ENCODE measurements at regions of chr6 and their contacts with region 1.

Region 1: DNA sequence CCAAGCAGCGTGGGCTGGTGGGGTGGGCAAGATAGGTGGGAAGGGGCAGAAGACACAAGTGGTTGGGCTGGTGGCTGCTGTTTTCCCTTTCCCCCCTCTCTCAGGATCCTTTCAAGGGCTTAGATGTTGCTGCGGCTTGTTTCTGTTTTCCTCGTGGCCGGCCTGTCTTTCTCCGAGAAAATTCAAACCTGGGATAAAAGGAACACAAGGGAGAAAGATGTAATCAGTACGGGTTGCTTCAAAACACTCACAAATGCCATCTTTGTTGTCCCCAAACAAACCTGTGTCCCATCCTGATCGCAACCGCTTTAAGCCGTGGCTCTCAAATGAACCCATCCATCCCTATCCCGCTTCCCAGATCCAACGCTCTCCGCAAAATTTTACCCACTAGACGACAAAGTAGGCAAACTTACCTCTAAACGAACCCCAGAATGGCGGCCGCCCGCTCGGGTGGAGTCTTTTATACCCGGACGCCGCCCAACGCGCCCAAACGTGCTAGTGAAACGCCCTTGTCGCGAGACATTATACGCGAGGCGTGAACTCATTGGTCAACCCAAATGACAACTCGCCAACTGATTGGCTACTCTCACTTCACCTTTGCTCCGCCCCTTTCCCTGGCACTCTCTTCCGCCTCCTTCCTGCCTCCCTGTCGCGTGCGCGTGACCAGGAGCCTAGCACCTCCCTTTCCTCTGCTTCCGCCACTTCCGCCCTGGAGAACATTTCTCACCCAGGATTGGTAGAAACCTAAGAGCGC is at the start of gene PPP1R10:
- DNase-seq: peak; percentile 100
- ATAC-seq: peak; percentile 83
- H3K4me3 ChIP-seq: peak within 1 kb of the TSS; percentile 87 to 97 (median 89)
- H3K27ac ChIP-seq: peak within 1 kb of the TSS; percentile 98
- H3K4me1 ChIP-seq: peaks cover 35% of the 10 kb centered on the region
- H3K27me3 ChIP-seq: no peaks in the 10 kb centered on the region; a peak in 1 of 5 replicates
- CTCF ChIP-seq: no peak
- EP300 ChIP-seq: no peak; a peak in 1 of 4 replicates
- POLR2A ChIP-seq: peak; percentile 98 to 100
- RAD21 ChIP-seq: no peak; the same call in 1 of the 2 replicates
- total RNA-seq, gene PPP1R10: 19.5 and 38.4 TPM in 2 replicates

Region 2: GRCh38 chr6:30219244-30219643 is 397.7 kb before region 1 on chr6:
- CTCF ChIA-PET with region 1: no interaction called
- POLR2A ChIA-PET with region 1: no interaction called
- in situ Hi-C with region 1: no loop called
- intact Hi-C with region 1: no loop called
- DNase-seq: peak; percentile 77
- ATAC-seq: peak; percentile 77
- H3K4me3 ChIP-seq: peak overlapping the region in 1 of 3 experiments; percentile 41; a peak in 1 of 6 replicates
- H3K27ac ChIP-seq: no peak overlapping the region
- H3K4me1 ChIP-seq: peaks cover 23% of the 10 kb centered on the region
- H3K27me3 ChIP-seq: no peaks in the 10 kb centered on the region
- CTCF ChIP-seq: peak; percentile 91
- EP300 ChIP-seq: no peak
- POLR2A ChIP-seq: no peak
- RAD21 ChIP-seq: peak; percentile 77

Region 3: GRCh38 chr6:30396833-30397479 is 220.0 kb before region 1 on chr6:
- CTCF ChIA-PET with region 1: no interaction called
- POLR2A ChIA-PET with region 1: no interaction called
- in situ Hi-C with region 1: no loop called
- intact Hi-C with region 1: no loop called
- DNase-seq: peak; percentile 58
- ATAC-seq: peak; percentile 99
- H3K4me3 ChIP-seq: no peak overlapping the region
- H3K27ac ChIP-seq: no peak overlapping the region
- H3K4me1 ChIP-seq: no peaks in the 10 kb centered on the region
- H3K27me3 ChIP-seq: peaks cover 5 to 44% of the 10 kb centered on the region in 2 experiments
- CTCF ChIP-seq: peak; percentile 99
- EP300 ChIP-seq: no peak
- POLR2A ChIP-seq: no peak
- RAD21 ChIP-seq: peak; percentile 95

Region 4: DNA sequence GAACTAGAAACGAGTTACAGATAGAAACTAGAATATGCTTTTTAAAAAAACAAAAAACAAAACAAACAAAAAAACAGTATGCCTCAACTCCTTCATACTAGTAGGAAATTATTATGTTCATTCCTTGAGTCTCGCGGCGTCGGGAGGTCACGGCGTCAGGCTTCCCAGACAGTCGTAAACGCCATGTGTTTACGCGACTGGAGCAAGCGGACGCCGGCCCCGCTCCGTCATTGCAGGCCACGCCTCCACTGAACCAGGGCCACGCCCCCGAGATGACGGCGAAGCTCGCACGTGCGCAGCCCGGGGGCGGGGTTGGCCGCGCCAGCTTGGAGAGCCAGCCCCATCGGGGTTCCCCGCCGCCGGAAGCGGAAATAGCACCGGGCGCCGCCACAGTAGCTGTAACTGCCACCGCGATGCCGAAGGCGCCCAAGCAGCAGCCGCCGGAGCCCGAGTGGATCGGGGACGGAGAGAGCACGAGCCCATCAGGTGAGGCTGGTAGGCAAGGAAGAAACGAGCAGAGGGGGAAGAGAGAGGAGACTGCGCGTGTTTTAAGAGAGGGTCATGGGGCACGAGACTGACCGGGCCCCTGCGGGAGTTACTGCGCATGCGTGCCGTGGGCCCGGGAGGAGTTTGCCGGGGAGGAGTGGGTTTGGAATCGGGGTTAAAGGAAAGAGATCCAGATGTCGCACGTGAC is 45.8 kb before region 1 on chr6 and contains the start of gene ABCF1:
- CTCF ChIA-PET with region 1: no interaction called
- POLR2A ChIA-PET with region 1: interaction called, 64 read pairs
- in situ Hi-C with region 1: no loop called
- intact Hi-C with region 1: no loop called
- DNase-seq: peak; percentile 94
- ATAC-seq: peak; percentile 92
- H3K4me3 ChIP-seq: peak within 1 kb of the TSS; percentile 67 to 88 (median 71)
- H3K27ac ChIP-seq: peak within 1 kb of the TSS; percentile 80
- H3K4me1 ChIP-seq: peaks cover 51% of the 10 kb centered on the region
- H3K27me3 ChIP-seq: no peaks in the 10 kb centered on the region; a peak in 1 of 5 replicates
- CTCF ChIP-seq: peak; percentile 18; the same call in 1 of the 2 replicates
- EP300 ChIP-seq: peak in 1 of 2 experiments; percentile 26; a peak in 1 of 4 replicates
- POLR2A ChIP-seq: peak; percentile 88 to 95
- RAD21 ChIP-seq: no peak
- total RNA-seq, gene ABCF1: 98.9 and 104 TPM in 2 replicates

Region 5: DNA sequence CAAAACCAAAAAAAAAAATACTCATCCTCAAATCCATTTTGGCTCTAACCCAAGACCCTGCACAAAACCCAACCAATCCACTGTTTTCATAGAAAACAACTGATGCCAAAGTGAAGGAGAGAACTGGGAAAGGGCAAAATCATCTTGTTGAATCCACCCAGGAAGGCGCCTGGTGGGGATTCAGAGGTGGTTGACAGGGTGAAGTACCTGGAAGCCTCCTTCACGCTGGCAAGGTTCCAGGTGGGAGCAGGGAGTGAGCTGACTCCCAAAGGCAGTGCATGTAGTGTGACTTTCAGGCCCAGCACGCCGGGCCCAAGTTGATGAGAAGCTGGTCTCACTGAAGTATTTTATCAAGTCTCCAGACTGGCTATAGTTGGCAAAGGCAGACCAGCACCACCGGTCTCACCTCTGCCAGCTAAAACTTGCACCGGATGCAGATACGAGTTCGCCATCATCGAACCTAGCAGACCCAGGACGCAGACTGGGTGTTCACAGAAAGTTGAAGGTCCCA is 16.5 kb before region 1 on chr6:
- CTCF ChIA-PET with region 1: no interaction called
- POLR2A ChIA-PET with region 1: interaction called, 172 read pairs
- in situ Hi-C with region 1: no loop called
- intact Hi-C with region 1: no loop called
- DNase-seq: no peak
- ATAC-seq: no peak
- H3K4me3 ChIP-seq: no peak overlapping the region
- H3K27ac ChIP-seq: no peak overlapping the region
- H3K4me1 ChIP-seq: no peaks in the 10 kb centered on the region
- H3K27me3 ChIP-seq: no peaks in the 10 kb centered on the region
- CTCF ChIP-seq: no peak
- EP300 ChIP-seq: no peak
- POLR2A ChIP-seq: no peak
- RAD21 ChIP-seq: no peak

Region 6: GRCh38 chr6:30646458-30647241 is 29.7 kb after region 1 on chr6 and contains the start of gene C6orf136:
- CTCF ChIA-PET with region 1: no interaction called
- POLR2A ChIA-PET with region 1: interaction called, 27 read pairs
- in situ Hi-C with region 1: no loop called
- intact Hi-C with region 1: no loop called
- DNase-seq: peak; percentile 91
- ATAC-seq: peak; percentile 73
- H3K4me3 ChIP-seq: peak within 1 kb of the TSS; percentile 67 to 98 (median 94)
- H3K27ac ChIP-seq: peak within 1 kb of the TSS; percentile 88
- H3K4me1 ChIP-seq: peaks cover 38% of the 10 kb centered on the region
- H3K27me3 ChIP-seq: no peaks in the 10 kb centered on the region; a peak in 1 of 5 replicates
- CTCF ChIP-seq: 0 out of 2 replicates have a peak, but pooled peaks have one; percentile 10
- EP300 ChIP-seq: no peak
- POLR2A ChIP-seq: no peak
- RAD21 ChIP-seq: no peak
- total RNA-seq, gene C6orf136: 9.2 and 12.0 TPM in 2 replicates

Region 7: GRCh38 chr6:30672445-30673253 is 55.7 kb after region 1 on chr6 and contains the start of gene DHX16:
- CTCF ChIA-PET with region 1: no interaction called
- POLR2A ChIA-PET with region 1: interaction called, 44 read pairs
- in situ Hi-C with region 1: no loop called
- intact Hi-C with region 1: loop called (anchors 2 kb)
- DNase-seq: peak; percentile 97
- ATAC-seq: peak; percentile 89
- H3K4me3 ChIP-seq: peak within 1 kb of the TSS; percentile 76 to 95 (median 82)
- H3K27ac ChIP-seq: peak within 1 kb of the TSS; percentile 67
- H3K4me1 ChIP-seq: peaks cover 23% of the 10 kb centered on the region
- H3K27me3 ChIP-seq: no peaks in the 10 kb centered on the region; a peak in 1 of 5 replicates
- CTCF ChIP-seq: peak; percentile 91
- EP300 ChIP-seq: peak in 1 of 2 experiments; percentile 53; a peak in 3 of 4 replicates
- POLR2A ChIP-seq: peak; percentile 79 to 81
- RAD21 ChIP-seq: peak; percentile 71
- total RNA-seq, gene DHX16: 48.2 and 58.5 TPM in 2 replicates

Measured in HepG2 (cell line).